ENCODE measurements at regions of chr7 and their contacts with region 1.

Region 1: DNA sequence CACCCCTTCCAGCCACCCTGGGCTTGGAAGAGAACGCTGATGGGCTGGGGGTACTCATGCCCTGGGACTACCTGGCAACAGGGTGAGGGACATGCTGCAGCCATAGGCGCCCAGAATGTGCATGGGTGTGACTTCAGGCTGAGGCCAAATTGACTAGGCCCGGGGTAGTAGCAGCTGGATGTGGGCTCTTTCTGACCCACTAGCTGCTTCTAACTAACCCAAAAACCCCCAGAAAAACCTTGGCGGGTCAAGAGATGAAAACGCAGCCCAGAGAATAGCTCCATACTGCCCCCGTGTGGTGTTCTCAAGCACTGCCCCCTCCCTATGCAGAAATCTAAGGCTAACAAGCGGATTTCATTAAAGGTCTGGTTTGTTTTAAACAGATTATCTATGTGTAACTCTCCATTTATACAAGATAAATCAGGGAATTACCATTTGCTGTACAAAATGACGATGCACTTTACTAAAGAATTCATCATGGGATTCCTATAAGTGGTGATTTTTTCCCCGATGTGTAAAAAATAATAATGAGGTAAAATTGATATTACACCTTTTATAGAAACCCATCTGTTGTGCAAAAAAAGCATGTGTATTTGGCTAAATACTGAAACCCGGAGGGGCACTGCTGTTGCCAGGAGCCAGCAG is 4.2 kb downstream of the SMARCD3 start:
- DNase-seq: peak; percentile 81
- H3K4me3 Mint-ChIP-seq: peak overlapping the region; percentile 46
- H3K27ac Mint-ChIP-seq: no peak overlapping the region
- H3K4me1 Mint-ChIP-seq: peaks cover 41% of the 10 kb centered on the region
- H3K27me3 Mint-ChIP-seq: peaks cover 26% of the 10 kb centered on the region

Region 2: GRCh38 chr7:151123822-151124464 is 120.4 kb before region 1 on chr7:
- CTCF ChIA-PET with region 1: interaction called, 10 read pairs
- intact Hi-C with region 1: loop called (anchors 1 kb)
- DNase-seq: peak; percentile 89
- H3K4me3 Mint-ChIP-seq: no peak overlapping the region
- H3K27ac Mint-ChIP-seq: no peak overlapping the region
- H3K4me1 Mint-ChIP-seq: peaks cover 4% of the 10 kb centered on the region
- H3K27me3 Mint-ChIP-seq: no peaks in the 10 kb centered on the region

Region 3: GRCh38 chr7:151172273-151173141 is 71.8 kb before region 1 on chr7:
- CTCF ChIA-PET with region 1: interaction called, 7 read pairs
- intact Hi-C with region 1: loop called (anchors 1 kb)
- DNase-seq: peak; percentile 81
- H3K4me3 Mint-ChIP-seq: no peak overlapping the region
- H3K27ac Mint-ChIP-seq: no peak overlapping the region
- H3K4me1 Mint-ChIP-seq: peaks cover 10% of the 10 kb centered on the region
- H3K27me3 Mint-ChIP-seq: peaks cover 51% of the 10 kb centered on the region

Region 4: GRCh38 chr7:151232091-151232916 is 12.0 kb before region 1 on chr7 and contains the start of gene CHPF2:
- CTCF ChIA-PET with region 1: interaction called, 97 read pairs
- intact Hi-C with region 1: loop called (anchors 1 kb)
- DNase-seq: peak; percentile 94
- H3K4me3 Mint-ChIP-seq: peak within 1 kb of the TSS; percentile 100
- H3K27ac Mint-ChIP-seq: peak within 1 kb of the TSS; percentile 99
- H3K4me1 Mint-ChIP-seq: peaks cover 35% of the 10 kb centered on the region
- H3K27me3 Mint-ChIP-seq: no peaks in the 10 kb centered on the region
- total RNA-seq, gene CHPF2: 21.0 TPM

Region 5: GRCh38 chr7:151256410-151257045 is 12.2 kb after region 1 on chr7:
- CTCF ChIA-PET with region 1: interaction called, 13 read pairs
- intact Hi-C with region 1: no loop called
- DNase-seq: no peak
- H3K4me3 Mint-ChIP-seq: no peak overlapping the region
- H3K27ac Mint-ChIP-seq: no peak overlapping the region
- H3K4me1 Mint-ChIP-seq: peaks cover 3% of the 10 kb centered on the region
- H3K27me3 Mint-ChIP-seq: peaks cover 24% of the 10 kb centered on the region

Region 6: DNA sequence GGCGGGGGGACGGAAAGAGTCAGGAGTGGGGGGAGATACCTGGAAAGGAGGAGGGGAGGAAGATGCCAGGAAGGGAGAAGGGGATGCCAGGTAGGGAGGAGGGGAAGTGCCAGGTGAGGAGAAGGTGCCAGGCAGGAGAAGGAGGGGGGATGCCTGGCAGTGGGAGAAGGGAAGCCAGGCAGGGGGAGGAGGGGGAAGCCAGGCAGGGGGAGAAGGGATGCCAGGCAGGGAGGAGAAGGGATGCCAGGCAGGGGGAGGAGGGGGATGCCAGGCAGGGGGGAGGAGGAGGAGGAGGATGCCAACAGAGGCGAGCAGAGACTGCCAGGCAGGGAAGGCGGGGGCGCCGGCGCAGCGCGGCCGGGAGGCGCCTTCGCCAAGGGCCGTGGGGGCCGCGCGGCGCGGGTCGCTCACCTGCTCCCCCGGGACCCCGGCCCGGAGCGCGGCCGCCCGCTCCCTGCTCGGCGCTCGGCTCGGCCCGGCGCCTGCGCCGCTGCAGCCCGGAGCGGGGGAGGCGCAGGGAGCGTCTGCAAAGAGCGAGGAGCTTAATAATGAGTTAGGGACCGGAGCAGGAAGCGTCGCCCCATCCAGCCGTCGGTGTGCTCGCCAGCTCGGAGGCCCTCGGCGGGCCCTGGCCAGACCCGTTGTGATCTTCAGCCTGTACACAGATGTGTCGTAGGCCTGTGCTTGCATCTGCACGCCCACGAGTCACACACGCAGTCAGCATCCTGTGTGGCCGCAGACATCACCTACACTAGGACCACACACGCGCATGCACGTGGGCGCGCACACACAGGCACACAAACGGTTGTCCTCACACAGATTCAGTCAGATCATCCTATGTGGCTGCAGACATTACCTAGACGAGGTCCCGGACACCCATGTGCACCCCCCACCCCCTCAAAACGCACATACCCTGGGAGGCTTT is 32.6 kb after region 1 on chr7:
- CTCF ChIA-PET with region 1: interaction called, 3 read pairs
- intact Hi-C with region 1: loop called (anchors 2 kb)
- DNase-seq: peak; percentile 74
- H3K4me3 Mint-ChIP-seq: peak overlapping the region; percentile 61
- H3K27ac Mint-ChIP-seq: no peak overlapping the region
- H3K4me1 Mint-ChIP-seq: peaks cover 17% of the 10 kb centered on the region
- H3K27me3 Mint-ChIP-seq: no peaks in the 10 kb centered on the region

Region 7: GRCh38 chr7:151304856-151305255 is 60.5 kb after region 1 on chr7:
- CTCF ChIA-PET with region 1: interaction called, 22 read pairs
- intact Hi-C with region 1: loop called (anchors 1 kb)
- DNase-seq: no peak
- H3K4me3 Mint-ChIP-seq: peak overlapping the region; percentile 36
- H3K27ac Mint-ChIP-seq: no peak overlapping the region
- H3K4me1 Mint-ChIP-seq: peaks cover 5% of the 10 kb centered on the region
- H3K27me3 Mint-ChIP-seq: peaks cover 14% of the 10 kb centered on the region